ENCODE measurements at regions of chr19 and their contacts with region 1.

Region 1: GRCh38 chr19:8505680-8506401 is 3.4 kb upstream of the PRAM1 start:
- DNase-seq: peak; percentile 98
- H3K4me3 ChIP-seq: peak overlapping the region; percentile 54 to 69
- H3K27ac ChIP-seq: peak overlapping the region in 1 of 2 experiments; percentile 48; a peak in 2 of 4 replicates
- H3K4me1 ChIP-seq: peaks cover 0 to 5% of the 10 kb centered on the region in 2 experiments; a peak in 1 of 4 replicates
- H3K27me3 ChIP-seq: no peaks in the 10 kb centered on the region
- CTCF ChIP-seq: peak; percentile 91
- EP300 ChIP-seq: no peak
- RAD21 ChIP-seq: peak; percentile 73

Region 2: GRCh38 chr19:8412783-8413628 is 92.8 kb before region 1 on chr19 and contains the start of gene MARCHF2:
- CTCF ChIA-PET with region 1: interaction called, 19 read pairs
- POLR2A ChIA-PET with region 1: interaction called, 5 read pairs
- DNase-seq: peak; percentile 99
- H3K4me3 ChIP-seq: peak within 1 kb of the TSS; percentile 63 to 77
- H3K27ac ChIP-seq: 0 out of 4 replicates have a peak within 1 kb of the TSS, but pooled peaks of 1 of the 2 experiments have one; percentile 26
- H3K4me1 ChIP-seq: peaks cover 3 to 4% of the 10 kb centered on the region in 2 experiments; a peak in 2 of 4 replicates
- H3K27me3 ChIP-seq: no peaks in the 10 kb centered on the region
- CTCF ChIP-seq: peak; percentile 66
- EP300 ChIP-seq: no peak
- RAD21 ChIP-seq: peak; percentile 50
- polyA plus RNA-seq, gene MARCHF2: 52.9 and 57.2 TPM in 2 replicates

Region 3: DNA sequence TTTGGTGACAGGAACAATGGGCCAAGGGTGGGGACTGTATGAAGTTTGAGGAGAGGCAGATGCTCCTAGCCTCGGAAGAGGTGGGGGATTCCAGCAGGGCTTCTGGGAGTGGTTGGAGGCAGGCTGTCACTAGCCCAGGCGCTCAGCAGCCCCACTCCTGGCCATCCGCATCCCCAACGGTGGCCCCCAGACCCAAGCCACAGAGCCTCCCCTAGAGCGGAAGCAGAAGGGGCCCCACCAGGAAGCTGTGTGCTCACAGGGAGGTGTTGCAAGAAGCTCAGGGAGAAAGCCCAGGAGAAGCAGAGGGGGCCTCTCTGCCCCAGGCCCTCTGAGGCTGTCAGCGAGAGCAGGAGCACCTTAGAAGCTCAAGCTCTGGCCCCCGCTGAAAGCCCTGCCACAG is 11.7 kb before region 1 on chr19:
- CTCF ChIA-PET with region 1: interaction called, 34 read pairs
- POLR2A ChIA-PET with region 1: no interaction called
- DNase-seq: no peak
- H3K4me3 ChIP-seq: no peak overlapping the region
- H3K27ac ChIP-seq: no peak overlapping the region
- H3K4me1 ChIP-seq: no peaks in the 10 kb centered on the region
- H3K27me3 ChIP-seq: no peaks in the 10 kb centered on the region
- CTCF ChIP-seq: no peak
- EP300 ChIP-seq: no peak
- RAD21 ChIP-seq: no peak